ENCODE measurements at regions of chr9 and their contacts with region 1.

Region 1: GRCh38 chr9:69672596-69673310 is 582 bp upstream of the APBA1 start:
- DNase-seq: peak; percentile 74 to 97 (median 85)

Region 2: DNA sequence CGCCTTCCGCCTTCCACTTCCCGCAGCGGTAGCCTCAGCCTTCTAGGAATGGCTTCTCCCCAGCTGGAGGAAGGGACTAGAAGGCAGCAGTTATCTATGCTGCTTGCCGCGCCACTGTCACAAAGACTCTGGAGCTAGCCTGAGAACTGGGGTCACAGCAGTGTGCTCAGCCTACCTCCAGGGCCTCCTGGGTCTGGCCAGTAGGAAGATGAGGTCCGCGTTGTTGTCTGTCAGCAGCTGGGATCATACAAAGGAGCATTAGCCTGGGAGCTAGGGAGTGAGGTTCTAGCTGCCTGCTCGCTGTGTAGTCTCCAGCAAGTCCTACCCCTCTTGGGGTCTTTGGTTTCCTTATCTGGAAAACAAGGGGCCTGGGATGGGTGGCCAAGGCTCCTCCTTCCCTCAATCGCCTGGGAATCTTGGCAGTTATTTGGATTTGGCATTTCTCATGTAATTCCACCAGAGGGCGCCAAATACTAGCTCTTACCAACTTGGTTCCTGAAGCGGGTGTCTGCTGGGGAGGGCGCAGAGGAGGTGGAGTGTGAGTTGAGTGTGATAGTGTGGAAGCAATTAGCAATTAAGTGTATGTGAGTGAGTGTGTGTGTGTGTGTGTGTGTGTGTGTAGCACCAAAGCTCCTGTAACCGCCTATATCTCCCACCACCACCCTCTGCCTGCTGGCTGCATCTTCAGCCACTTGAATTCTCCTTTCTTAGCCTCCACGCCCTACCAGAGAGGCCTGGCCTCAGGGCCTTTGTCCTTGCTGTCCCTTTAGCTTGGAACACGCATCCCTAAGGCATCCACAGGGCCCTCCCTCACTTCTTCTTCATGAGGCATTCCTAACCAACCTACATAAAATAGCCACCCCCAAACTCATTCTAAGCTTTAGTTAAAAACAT is 250.6 kb before region 1 on chr9:
- intact Hi-C with region 1: loop called (anchors 5 kb)
- DNase-seq: peak in 7 of 10 donors; percentile 48 to 93 (median 65)

Region 3: GRCh38 chr9:69564557-69564956 is 108.2 kb before region 1 on chr9:
- intact Hi-C with region 1: loop called (anchors 5 kb)
- DNase-seq: no peak

Region 4: DNA sequence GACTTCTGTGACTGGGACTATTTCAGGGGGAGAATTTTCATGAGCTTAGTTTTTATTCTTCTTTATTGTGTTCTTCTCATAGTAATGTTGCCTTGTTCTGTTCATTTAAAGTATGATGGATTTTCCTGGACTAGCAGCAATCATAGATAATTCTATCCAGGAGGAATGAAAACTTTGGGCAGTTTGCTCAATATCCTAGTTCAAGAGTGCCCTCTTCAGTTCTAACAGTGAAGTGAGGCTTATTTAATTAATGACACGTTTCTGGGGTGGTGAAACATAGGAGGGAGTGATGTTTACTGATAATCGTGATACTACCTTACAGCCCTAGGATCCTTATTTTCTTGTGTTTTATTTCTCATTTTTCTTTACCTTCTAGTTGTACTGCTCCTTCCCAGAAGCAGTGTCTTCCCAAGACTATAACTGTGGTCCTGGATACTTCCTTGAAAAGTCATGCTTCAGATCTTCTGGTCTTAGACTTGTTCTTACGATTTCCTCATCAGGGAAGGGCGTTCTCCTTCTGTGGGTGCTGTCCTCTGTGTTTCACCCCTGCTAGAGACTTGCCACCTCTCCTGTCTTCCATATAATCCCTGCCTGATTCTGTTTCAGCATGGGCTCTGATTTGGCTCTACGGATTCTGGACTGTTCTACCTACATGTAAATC is 205.2 kb after region 1 on chr9:
- intact Hi-C with region 1: loop called (anchors 10 kb)
- DNase-seq: no peak

Region 5: DNA sequence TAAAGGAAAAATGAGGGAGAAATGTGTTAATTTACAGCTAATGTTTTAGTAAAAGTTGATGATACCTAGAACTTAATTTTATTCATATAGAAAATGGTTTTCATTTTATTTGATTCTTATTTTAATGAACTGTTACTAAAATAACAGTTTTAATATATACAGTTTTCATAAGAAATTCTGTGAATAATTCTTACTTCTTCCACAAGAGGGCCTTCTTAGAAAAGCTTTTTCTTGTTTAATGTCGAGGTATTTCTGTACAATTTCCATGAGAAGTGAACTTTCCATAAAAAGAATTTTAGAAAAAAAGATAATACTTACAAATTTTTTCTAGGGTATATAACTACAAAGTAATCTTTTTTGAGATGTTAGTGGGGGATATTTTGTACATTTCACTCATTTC is 667.8 kb after region 1 on chr9:
- intact Hi-C with region 1: no loop called
- DNase-seq: no peak

Region 6: GRCh38 chr9:70413798-70414775 is 741.3 kb after region 1 on chr9 and contains the start of gene KLF9:
- intact Hi-C with region 1: loop called (anchors 5 kb)
- DNase-seq: peak; percentile 86 to 99 (median 91)